Activated T-helper 1 cell treated with anti-CD3 and anti-CD28 coated beads, Interleukin-12 subunit alpha, Interleukin-12 subunit beta, Interleukin-2, Interleukin-4 antibody, amounts not matched to agents 30 ng/mL and 10 ng/mL and 1 ng/mL, durations not matched to agents 14 hours and 24 hours and 36 hours (primary cell): ENCODE measurements at regions of chr17 and their contacts with region 1.

Region 1: GRCh38 chr17:48892940-48893645 is 506 bp downstream of the ATP5MC1 start:
- DNase-seq: no peak
- H3K4me3 Mint-ChIP-seq: peak overlapping the region; percentile 97
- H3K27ac Mint-ChIP-seq: peak overlapping the region; percentile 95
- H3K4me1 Mint-ChIP-seq: peaks cover 31% of the 10 kb centered on the region
- H3K27me3 Mint-ChIP-seq: no peaks in the 10 kb centered on the region

Region 2: DNA sequence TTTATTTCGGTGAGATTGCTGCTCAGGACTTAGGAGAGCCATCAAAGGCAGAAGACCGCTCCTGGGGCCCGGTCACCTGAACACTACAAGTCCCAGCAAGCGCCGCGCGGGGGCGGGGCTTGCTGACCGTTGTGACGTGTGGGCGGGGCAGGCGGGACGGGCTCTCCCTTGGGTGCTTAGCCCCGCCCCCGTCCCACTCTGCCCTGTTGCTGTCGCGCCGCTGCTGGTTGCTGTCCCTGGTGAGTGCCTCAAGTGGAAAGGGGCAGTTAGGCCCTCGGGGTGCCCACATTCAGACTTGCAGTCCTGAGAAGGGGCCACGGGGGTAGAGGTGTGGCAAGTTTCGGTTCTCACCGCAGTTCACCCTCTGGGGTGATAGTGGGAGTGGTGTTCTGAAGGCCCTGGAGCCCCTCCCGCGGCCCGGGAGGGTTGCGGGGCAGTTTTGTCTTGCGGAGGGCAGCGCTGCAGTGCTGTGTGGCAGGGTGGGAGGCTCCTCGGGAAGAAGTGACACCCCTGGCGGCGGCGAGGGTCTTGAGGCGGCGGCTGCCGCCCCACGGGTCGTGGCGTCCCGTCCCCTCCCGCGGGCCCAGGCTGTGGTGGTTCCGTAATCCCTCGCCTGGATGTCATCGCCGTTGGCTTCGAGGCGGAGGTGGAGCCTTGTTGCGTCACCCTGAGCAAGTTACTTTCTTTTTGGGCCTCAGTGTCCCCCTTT is 62.1 kb before region 1 on chr17 and contains the start of gene CALCOCO2:
- intact Hi-C with region 1: loop called (anchors 1 kb)
- DNase-seq: peak; percentile 85
- H3K4me3 Mint-ChIP-seq: peak within 1 kb of the TSS; percentile 93
- H3K27ac Mint-ChIP-seq: peak within 1 kb of the TSS; percentile 97
- H3K4me1 Mint-ChIP-seq: peaks cover 50% of the 10 kb centered on the region
- H3K27me3 Mint-ChIP-seq: peaks cover 12% of the 10 kb centered on the region
- total RNA-seq, gene CALCOCO2: 50.3 and 57.9 TPM in 2 replicates

Region 3: GRCh38 chr17:48908047-48908843 is 15.2 kb after region 1 on chr17 and contains the start of gene UBE2Z:
- intact Hi-C with region 1: loop called (anchors 1 kb)
- DNase-seq: peak; percentile 81
- H3K4me3 Mint-ChIP-seq: peak within 1 kb of the TSS; percentile 93
- H3K27ac Mint-ChIP-seq: peak within 1 kb of the TSS; percentile 97
- H3K4me1 Mint-ChIP-seq: peaks cover 43% of the 10 kb centered on the region
- H3K27me3 Mint-ChIP-seq: no peaks in the 10 kb centered on the region
- total RNA-seq, gene UBE2Z: 88.8 and 91.5 TPM in 2 replicates

Region 4: DNA sequence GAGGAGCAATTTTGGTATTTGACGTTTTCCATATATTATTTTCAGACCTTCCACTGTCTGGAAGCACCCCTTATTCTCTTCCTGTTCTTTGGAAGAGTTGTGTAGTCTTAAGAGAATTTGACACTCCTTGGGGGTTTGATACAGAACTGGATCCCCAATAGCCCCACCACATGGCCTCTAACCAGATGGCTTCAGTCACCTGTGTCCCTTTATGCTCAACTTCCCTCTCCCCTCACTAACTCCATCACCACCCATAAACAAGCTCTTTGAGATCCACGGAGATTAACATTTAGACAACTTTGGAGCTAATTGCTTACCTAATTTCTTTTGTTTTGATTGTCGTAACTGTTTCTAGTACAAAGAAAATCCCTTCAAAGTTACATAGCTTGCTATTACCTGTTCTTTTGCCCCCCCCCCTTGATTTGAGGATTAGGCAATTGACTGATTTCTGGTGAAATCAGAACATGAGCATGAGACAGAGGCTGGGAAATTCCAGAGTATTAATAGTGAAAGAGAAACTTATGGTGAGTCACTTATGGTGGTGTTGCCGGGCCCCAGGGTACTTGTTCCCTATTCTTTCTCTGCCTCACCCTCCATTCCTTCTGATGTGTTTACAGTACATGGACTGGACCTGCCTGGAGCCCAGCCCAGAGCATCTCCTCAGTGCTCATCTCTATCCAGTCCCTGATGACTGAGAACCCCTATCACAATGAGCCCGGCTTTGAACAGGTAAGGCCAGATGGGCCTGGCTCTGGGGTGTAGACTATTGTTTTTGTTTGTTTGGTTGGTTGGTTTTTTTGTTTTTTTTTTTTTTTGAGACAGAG is 22.6 kb after region 1 on chr17:
- intact Hi-C with region 1: loop called (anchors 1 kb)
- DNase-seq: peak; percentile 68
- H3K4me3 Mint-ChIP-seq: peak overlapping the region; percentile 70
- H3K27ac Mint-ChIP-seq: peak overlapping the region; percentile 88
- H3K4me1 Mint-ChIP-seq: peaks cover 55% of the 10 kb centered on the region
- H3K27me3 Mint-ChIP-seq: no peaks in the 10 kb centered on the region

Region 5: DNA sequence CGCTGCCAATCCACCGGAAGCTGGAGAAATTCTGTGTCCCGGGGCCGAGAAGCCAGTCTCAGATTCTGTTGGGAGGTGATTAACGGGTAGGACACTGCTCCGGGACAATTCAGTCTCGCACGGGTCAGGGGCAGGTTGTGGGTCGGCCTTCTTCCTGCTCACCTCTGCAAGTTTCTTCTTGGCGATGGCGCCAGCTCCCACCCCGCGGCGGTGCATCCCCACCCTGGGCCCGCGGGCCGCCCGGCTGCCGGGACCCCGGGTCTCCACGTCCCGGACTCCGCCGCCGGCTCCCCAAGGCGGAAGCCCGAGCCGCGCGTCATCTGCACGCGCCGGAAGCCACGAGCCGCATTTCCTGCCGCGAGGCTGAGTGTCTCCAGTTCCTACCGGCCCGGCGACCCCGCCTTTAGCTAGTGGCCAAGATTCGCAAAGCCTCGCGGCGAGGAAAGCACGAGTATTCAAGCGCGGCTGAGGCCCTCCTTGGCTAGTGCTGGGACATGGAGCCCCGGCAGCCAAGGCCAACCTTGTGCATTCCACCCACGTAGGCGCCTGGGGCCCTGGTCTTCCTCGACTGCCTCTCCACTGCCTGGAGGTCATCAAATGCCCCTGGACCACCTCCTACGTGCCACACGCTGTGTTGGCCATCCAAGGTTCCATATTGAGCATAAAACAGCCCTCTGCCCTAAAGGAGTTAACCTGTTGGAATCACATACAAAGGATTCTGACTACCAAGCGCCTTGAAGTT is 51.6 kb after region 1 on chr17 and contains the start of gene SNF8:
- intact Hi-C with region 1: loop called (anchors 1 kb)
- DNase-seq: peak; percentile 93
- H3K4me3 Mint-ChIP-seq: peak within 1 kb of the TSS; percentile 100
- H3K27ac Mint-ChIP-seq: peak within 1 kb of the TSS; percentile 97
- H3K4me1 Mint-ChIP-seq: peaks cover 15% of the 10 kb centered on the region
- H3K27me3 Mint-ChIP-seq: no peaks in the 10 kb centered on the region
- total RNA-seq, gene SNF8: 148 and 163 TPM in 2 replicates

Region 6: DNA sequence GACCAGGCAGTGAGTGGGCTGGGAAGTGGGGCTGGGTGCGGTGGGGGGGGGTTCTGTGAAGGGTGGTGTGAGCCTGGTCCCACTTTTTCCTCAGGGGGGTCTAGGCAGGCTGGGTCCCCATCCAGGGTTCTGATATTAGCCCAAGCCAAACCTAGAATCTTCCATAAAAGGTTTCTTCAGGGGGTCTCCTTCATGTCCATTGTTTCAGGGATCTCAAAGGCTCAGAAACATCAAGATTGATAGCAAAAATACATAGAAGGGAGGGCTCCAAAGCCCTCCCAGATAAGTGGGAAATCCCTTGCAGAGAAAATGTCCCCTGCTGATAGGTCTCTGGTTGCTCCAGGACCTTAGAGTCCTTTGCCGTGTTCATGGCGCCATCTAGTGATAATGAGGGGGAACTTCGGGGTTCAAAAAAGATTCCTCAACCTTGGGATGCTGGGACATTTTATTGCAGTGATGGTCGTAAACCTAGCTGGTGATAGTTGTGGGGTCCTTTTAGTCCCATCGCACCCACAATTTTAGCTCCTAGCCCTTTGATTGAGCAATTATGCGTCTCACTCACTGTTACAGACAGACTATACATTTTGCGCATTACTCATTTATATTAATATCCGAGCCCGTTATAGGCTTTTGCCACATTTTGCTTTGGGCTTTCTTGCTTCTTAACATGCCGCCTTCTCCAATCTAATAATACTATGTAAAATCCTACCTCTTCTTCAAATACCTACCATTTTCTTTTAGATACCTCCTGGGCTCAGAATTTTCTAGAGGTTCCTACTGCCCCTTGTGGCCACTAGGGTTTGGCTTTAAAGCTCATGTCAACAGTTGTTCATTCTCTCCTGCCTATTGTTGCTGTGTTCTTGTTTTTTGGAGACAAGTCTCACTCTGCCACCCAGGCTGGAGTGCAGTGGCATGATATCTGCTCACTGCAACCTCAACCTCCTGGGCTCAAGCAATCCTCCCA is 139.2 kb after region 1 on chr17:
- intact Hi-C with region 1: loop called (anchors 1 kb)
- DNase-seq: peak; percentile 30
- H3K4me3 Mint-ChIP-seq: no peak overlapping the region
- H3K27ac Mint-ChIP-seq: no peak overlapping the region
- H3K4me1 Mint-ChIP-seq: no peaks in the 10 kb centered on the region
- H3K27me3 Mint-ChIP-seq: peaks cover 5% of the 10 kb centered on the region

Region 7: GRCh38 chr17:49414622-49415350 is 521.7 kb after region 1 on chr17 and contains the start of gene PHB1:
- intact Hi-C with region 1: loop called (anchors 1 kb)
- DNase-seq: peak; percentile 93
- H3K4me3 Mint-ChIP-seq: peak within 1 kb of the TSS; percentile 98
- H3K27ac Mint-ChIP-seq: peak within 1 kb of the TSS; percentile 95
- H3K4me1 Mint-ChIP-seq: peaks cover 9% of the 10 kb centered on the region
- H3K27me3 Mint-ChIP-seq: peaks cover 3% of the 10 kb centered on the region
- total RNA-seq, gene PHB1: 395 and 401 TPM in 2 replicates